Ovary (tissue), 10 donors: ENCODE measurements at regions of chr15 and their contacts with region 1.

Region 1: GRCh38 chr15:71455107-71455506 is 339.8 kb downstream of the THSD4 start:
- DNase-seq: no peak
- H3K4me3 ChIP-seq: no peak overlapping the region
- H3K27ac ChIP-seq: no peak overlapping the region
- H3K4me1 ChIP-seq: no peaks in the 10 kb centered on the region
- H3K27me3 ChIP-seq: no peaks in the 10 kb centered on the region
- CTCF ChIP-seq: no peak
- EP300 ChIP-seq: no peak
- POLR2A ChIP-seq: no peak

Region 2: DNA sequence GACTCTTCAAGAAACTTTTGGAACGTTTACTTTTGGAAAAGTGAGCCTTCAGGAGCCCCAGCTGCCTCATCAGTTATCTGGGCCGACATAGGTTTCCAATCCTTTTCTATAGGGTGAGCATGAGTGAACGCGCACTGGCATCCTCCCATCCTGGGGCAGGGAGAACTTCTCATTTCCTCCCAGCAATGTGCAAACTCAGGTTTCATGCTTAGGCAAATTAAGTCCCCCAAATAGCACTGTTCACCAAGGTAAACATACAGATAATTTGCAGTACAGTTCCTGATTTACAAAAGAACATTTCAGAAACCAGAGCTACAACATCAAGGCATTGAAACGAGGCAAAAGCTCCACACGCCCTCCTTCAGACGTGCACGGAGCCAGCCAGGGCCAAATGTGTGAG is 21.7 kb after region 1 on chr15:
- intact Hi-C with region 1: no loop called
- DNase-seq: no peak
- H3K4me3 ChIP-seq: no peak overlapping the region
- H3K27ac ChIP-seq: no peak overlapping the region
- H3K4me1 ChIP-seq: no peaks in the 10 kb centered on the region
- H3K27me3 ChIP-seq: no peaks in the 10 kb centered on the region
- CTCF ChIP-seq: no peak
- EP300 ChIP-seq: no peak
- POLR2A ChIP-seq: no peak

Region 3: GRCh38 chr15:71730277-71731144 is 275.4 kb after region 1 on chr15:
- intact Hi-C with region 1: loop called in 3 of 4 experiments (anchors 5 to 10 kb)
- DNase-seq: peak in 1 of 5 donors; percentile 42
- H3K4me3 ChIP-seq: no peak overlapping the region
- H3K27ac ChIP-seq: no peak overlapping the region
- H3K4me1 ChIP-seq: no peaks in the 10 kb centered on the region
- H3K27me3 ChIP-seq: no peaks in the 10 kb centered on the region
- CTCF ChIP-seq: peak in 2 of 3 donors; percentile 24 to 57
- EP300 ChIP-seq: no peak
- POLR2A ChIP-seq: no peak